Left ventricle myocardium superior (tissue), 1 donor: ENCODE measurements at regions of chr2 and their contacts with region 1.

Region 1: DNA sequence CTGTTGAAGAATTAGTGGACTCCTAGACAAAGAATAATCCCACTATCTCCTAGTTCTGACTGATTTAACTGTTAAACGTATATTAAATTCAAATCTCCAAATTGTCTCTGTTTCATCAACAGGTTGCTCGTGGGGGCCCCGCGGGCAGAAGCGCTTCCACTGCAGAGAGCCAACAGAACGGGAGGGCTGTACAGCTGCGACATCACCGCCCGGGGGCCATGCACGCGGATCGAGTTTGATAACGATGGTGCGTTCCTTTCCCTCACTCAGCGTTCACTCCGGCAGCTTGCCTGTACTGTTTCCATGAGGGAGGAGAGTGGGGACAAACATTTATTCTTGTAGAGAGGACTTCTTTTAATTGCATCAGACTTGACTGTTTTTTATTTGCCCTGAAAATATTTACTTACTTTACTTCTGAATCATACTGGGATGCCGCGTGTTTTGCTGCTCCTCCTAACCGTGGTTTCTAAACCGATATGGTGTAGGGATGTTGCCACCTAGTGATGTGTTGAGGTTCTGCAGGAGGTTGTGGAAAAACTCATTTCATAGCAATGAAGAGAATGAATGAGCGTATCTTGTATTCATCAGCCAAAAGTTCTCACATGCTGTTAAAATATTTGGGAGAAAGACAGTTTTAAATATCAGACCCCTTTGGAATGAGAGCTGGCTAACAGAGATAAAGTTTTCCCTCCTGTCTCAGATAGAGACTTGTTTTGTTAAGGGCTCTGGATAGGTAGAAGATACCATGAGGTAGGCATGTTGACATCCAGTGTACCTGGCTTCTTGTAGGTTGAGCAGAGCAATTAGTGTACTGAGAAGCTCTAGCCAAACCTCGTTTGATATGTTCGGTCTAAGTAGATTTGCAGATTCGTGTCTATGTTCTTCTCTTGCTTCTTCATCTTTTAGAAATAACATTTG is 38.3 kb downstream of the ITGA6 start:
- DNase-seq: peak; percentile 38
- ATAC-seq: peak; percentile 78

Region 2: DNA sequence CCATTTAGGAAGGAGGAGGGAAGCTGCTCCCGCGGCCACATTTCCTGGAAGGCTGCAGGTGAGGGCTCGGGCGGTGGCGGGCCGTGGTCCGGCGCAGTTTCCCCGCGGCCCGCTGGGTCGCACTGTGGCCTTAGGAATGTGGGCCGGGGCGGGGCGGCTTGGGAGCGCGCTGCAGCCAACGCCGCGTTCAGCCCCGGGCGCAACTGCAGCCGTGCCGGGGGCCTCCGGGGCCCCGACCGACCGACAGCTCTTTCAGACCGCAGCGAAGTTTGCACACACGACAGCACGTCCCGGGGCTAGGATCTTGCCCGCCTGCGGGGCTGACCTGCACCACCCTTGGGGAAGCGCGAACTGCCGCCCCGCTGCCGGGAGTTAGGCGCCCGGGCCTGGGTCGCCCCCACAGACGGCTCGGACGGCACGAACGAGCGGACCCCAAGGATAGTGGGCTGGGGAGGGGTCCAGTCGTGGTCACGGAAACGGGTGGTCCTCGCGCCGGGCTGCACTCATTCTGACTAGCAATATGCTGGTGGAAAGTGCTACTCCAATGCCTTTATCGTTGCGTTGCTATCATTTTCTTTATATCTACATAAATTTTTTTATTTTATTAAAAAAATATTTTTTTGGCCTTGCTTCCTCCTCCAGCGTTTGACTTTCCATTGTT is 293.0 kb before region 1 on chr2:
- intact Hi-C with region 1: loop called (anchors 5 kb)
- DNase-seq: peak; percentile 83
- ATAC-seq: peak; percentile 100

Region 3: DNA sequence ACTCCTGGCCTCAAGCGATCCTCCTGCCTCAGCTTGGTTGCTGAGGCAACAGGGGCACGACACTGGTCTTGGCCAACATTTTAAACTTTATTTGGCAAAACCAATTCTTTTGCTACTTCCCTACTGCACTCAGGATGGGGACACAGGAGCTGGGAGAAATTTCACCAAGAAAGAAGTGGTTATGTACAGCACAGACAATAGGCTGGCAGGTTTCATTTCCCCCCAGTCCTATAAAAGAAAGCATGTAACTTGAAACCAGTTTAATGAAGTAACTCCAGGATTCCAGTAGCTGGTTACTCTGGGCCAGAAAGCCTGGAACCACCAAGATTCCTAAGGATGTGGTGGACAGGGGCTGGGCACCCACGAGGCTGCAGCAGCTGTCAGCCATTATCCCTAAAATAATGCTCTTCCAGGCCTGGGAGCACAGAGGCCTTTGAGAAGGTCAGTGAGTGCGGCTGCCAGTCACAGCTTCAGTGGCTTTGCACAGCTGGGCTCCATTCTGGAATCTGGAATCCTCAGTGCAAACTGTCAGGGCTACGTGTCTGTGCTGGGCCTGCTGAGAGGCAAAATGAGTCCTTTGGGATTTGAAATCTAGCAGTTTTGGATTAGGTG is 180.6 kb before region 1 on chr2:
- intact Hi-C with region 1: loop called (anchors 10 kb)
- DNase-seq: peak; percentile 37
- ATAC-seq: peak; percentile 64

Region 4: DNA sequence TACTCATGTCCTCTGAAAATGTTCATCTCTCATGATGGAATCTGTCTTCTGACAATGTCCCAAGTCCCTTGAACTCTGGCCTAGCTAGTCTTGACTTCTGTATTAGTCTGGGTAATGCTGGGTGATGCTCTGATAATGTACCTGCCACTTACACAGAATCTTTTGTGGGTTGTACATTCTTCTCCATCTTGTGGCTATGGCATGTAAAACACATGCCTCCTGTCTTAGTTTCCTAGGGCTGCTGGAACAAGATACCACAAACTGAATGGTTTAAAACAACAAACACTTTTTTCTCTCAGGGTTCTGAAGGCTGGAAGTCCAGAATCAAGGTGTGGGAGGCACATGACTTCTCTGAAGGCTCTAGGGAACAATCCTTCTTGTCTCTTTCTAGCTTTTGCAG is 327.0 kb after region 1 on chr2:
- intact Hi-C with region 1: no loop called
- DNase-seq: no peak
- ATAC-seq: no peak